Activated B cell treated with CpG ODN at 0.5 μM for 24 hours (primary cell): ENCODE measurements at regions of chr6 and their contacts with region 1.

Region 1: DNA sequence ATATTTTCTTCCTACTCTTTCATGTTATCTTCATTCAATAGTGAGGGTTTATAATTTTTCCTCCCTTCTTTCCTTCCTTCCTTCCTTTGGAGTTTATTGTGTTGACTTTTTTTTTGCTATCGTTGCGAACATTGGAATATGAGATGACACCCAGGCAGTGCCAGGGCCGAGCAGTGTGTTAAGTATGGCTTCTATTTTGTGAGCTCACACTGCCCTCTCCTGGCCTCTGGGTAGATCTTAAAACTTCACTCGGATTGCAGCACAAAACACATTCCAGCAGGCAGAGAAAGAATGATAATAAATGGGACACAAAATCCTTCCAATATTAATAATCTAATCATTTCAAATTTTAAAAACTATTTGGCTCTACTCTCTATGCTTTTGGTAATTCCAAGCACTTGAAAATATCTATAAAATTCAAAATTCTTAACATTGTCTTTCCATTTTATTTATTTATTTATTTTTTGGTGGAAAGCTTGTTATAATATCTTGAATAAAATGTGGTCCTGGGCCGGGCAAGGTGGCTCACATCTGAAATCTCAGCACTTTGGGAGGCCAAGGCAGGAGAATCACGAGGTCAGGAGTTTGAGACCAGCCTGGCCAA is 147.4 kb upstream of the OLIG3 start:
- DNase-seq: peak; percentile 20
- ATAC-seq: peak; percentile 83
- H3K4me3 Mint-ChIP-seq: no peak overlapping the region
- H3K27ac Mint-ChIP-seq: no peak overlapping the region
- H3K4me1 Mint-ChIP-seq: peaks cover 12% of the 10 kb centered on the region
- H3K27me3 Mint-ChIP-seq: peaks cover 1% of the 10 kb centered on the region
- CTCF ChIP-seq: peak; percentile 58

Region 2: DNA sequence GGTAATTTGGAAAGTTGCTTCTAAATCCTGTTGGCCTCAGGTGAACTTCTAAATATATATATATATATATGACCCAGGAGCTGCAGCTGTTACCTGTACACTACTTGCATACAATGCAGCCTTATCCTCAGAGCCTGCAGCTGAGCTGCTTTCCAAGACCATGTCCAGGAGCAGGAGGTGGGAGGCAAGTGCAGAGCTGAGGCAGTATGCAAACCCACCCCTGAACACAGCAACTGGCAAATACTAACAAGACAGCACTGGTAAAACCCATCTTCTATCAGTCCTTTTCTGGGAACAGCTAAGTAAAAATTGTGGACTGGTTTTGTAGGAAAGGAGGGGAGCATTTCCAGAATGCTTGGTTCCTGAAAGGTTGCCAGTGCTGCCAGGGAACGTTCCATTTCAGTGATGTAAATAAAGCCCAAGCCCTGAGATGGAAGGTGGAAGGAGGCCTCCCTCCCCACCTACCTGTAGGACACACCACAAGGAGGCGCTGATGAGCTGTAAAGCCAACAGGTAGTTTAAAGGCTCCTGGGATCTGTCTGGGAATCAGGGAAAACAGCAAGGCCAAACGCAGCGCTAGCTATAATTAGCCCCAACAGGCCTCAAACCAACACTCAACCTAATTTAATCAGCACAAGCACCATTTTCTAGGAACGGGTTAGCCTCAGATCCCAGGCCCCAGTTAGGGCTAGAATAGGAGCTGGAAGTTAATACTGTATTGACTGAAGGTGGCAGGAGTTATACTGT is 997.6 kb before region 1 on chr6:
- CTCF ChIA-PET with region 1: interaction called, 4 read pairs
- POLR2A ChIA-PET with region 1: no interaction called
- intact Hi-C with region 1: loop called (anchors 2 kb)
- DNase-seq: peak; percentile 63
- ATAC-seq: peak; percentile 59
- H3K4me3 Mint-ChIP-seq: no peak overlapping the region
- H3K27ac Mint-ChIP-seq: no peak overlapping the region
- H3K4me1 Mint-ChIP-seq: peaks cover 4% of the 10 kb centered on the region
- H3K27me3 Mint-ChIP-seq: no peaks in the 10 kb centered on the region
- CTCF ChIP-seq: peak; percentile 69

Region 3: GRCh38 chr6:137076277-137077068 is 565.1 kb before region 1 on chr6:
- CTCF ChIA-PET with region 1: interaction called, 11 read pairs
- POLR2A ChIA-PET with region 1: no interaction called
- intact Hi-C with region 1: loop called (anchors 1 kb)
- DNase-seq: peak; percentile 39
- ATAC-seq: peak; percentile 100
- H3K4me3 Mint-ChIP-seq: no peak overlapping the region
- H3K27ac Mint-ChIP-seq: no peak overlapping the region
- H3K4me1 Mint-ChIP-seq: peaks cover 2% of the 10 kb centered on the region
- H3K27me3 Mint-ChIP-seq: peaks cover 2% of the 10 kb centered on the region
- CTCF ChIP-seq: peak; percentile 77

Region 4: GRCh38 chr6:137313928-137314855 is 327.4 kb before region 1 on chr6:
- CTCF ChIA-PET with region 1: interaction called, 7 read pairs
- POLR2A ChIA-PET with region 1: no interaction called
- intact Hi-C with region 1: loop called (anchors 2 kb)
- DNase-seq: peak; percentile 31
- ATAC-seq: peak; percentile 90
- H3K4me3 Mint-ChIP-seq: no peak overlapping the region
- H3K27ac Mint-ChIP-seq: no peak overlapping the region
- H3K4me1 Mint-ChIP-seq: peaks cover 30% of the 10 kb centered on the region
- H3K27me3 Mint-ChIP-seq: no peaks in the 10 kb centered on the region
- CTCF ChIP-seq: peak; percentile 66

Region 5: GRCh38 chr6:137497721-137498463 is 143.7 kb before region 1 on chr6:
- CTCF ChIA-PET with region 1: no interaction called
- POLR2A ChIA-PET with region 1: no interaction called
- intact Hi-C with region 1: loop called (anchors 5 kb)
- DNase-seq: peak; percentile 37
- ATAC-seq: peak; percentile 34
- H3K4me3 Mint-ChIP-seq: peak overlapping the region; percentile 66
- H3K27ac Mint-ChIP-seq: no peak overlapping the region
- H3K4me1 Mint-ChIP-seq: peaks cover 44% of the 10 kb centered on the region
- H3K27me3 Mint-ChIP-seq: peaks cover 61% of the 10 kb centered on the region
- CTCF ChIP-seq: no peak